Activated T-helper 1 cell treated with anti-CD3 and anti-CD28 coated beads, Interleukin-12 subunit alpha, Interleukin-12 subunit beta, Interleukin-2, Interleukin-4 antibody, amounts not matched to agents 30 ng/mL and 10 ng/mL and 1 ng/mL, durations not matched to agents 14 hours and 24 hours and 36 hours (primary cell): ENCODE measurements at regions of chr12 and their contacts with region 1.

Region 1: GRCh38 chr12:101782273-101782731 is 43.0 kb upstream of the SYCP3 start:
- DNase-seq: no peak
- H3K4me3 Mint-ChIP-seq: no peak overlapping the region
- H3K27ac Mint-ChIP-seq: peak overlapping the region; percentile 84
- H3K4me1 Mint-ChIP-seq: peaks cover 30% of the 10 kb centered on the region
- H3K27me3 Mint-ChIP-seq: no peaks in the 10 kb centered on the region

Region 2: DNA sequence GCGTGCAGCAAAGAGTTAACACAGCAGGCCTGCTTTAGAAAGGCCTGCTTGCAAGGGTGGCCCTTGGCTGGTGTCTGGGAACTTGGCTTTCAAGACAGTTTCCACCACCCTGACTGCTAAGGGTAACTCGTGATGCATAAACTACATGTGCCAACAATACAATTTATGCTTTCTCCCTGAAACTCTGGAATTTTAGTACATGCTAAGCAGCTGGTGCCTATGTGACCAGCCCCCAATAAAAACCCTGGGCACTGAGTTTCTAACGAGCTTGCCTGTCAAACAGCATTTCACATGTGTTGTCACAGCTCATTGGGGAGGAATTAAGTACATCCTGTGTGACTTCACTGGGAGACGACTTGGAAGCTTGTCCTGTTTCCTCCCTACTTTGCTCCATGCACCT is 705.4 kb before region 1 on chr12:
- intact Hi-C with region 1: no loop called
- DNase-seq: no peak
- H3K4me3 Mint-ChIP-seq: no peak overlapping the region
- H3K27ac Mint-ChIP-seq: no peak overlapping the region
- H3K4me1 Mint-ChIP-seq: peaks cover 23% of the 10 kb centered on the region
- H3K27me3 Mint-ChIP-seq: peaks cover 3% of the 10 kb centered on the region

Region 3: GRCh38 chr12:101823891-101824290 is 41.6 kb after region 1 on chr12:
- intact Hi-C with region 1: loop called (anchors 1 kb)
- DNase-seq: peak; percentile 62
- H3K4me3 Mint-ChIP-seq: peak overlapping the region; percentile 57
- H3K27ac Mint-ChIP-seq: peak overlapping the region; percentile 87
- H3K4me1 Mint-ChIP-seq: peaks cover 77% of the 10 kb centered on the region
- H3K27me3 Mint-ChIP-seq: no peaks in the 10 kb centered on the region

Region 4: DNA sequence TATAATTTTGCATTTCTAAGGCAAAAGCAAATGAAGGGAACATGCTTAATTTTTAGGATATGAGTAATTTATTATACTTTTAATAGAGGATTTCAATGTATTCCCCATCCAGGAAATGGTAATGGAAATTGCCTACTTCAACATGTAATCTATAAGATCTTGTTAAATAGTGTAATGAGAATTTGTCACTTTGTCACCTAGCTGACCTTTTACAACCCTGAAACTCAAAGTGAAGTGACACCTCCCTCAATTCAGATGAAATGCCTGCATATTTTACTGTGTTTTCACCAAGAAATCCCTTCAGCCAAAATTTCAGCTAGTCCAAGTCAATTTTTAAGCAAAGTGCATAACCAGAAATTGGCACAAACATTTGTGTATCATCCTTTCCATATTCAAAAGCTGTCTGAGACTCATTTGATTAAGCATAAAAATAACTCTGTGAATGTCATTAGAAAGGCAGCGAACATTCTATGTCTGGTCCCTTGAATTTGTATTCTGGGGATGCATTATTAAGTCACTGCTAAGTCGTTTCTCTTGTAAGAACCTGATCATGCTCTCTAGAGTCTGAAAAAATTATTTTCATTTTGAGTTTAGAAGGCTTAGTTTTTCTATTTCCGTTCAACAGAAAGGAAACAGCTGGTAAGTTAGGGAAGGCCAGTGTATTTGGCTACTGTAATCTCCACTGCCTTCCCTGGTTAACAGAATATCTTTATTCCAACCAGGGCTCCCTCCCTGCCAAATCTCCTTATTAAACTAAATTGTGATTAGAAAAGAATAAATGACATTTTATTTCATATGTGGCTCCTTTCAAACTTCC is 597.3 kb after region 1 on chr12:
- intact Hi-C with region 1: no loop called
- DNase-seq: no peak
- H3K4me3 Mint-ChIP-seq: no peak overlapping the region
- H3K27ac Mint-ChIP-seq: no peak overlapping the region
- H3K4me1 Mint-ChIP-seq: no peaks in the 10 kb centered on the region
- H3K27me3 Mint-ChIP-seq: peaks cover 5% of the 10 kb centered on the region